ENCODE measurements at regions of chr1 and their contacts with region 1.

Region 1: GRCh38 chr1:156212833-156213643 is at the start of gene PMF1:
- DNase-seq: peak; percentile 87 to 97
- H3K4me3 ChIP-seq: peak within 1 kb of the TSS; percentile 53 to 97 (median 92)
- H3K27ac ChIP-seq: peak within 1 kb of the TSS; percentile 100
- H3K4me1 ChIP-seq: peaks cover 0 to 5% (median 3%) of the 10 kb centered on the region in 4 experiments; a peak in 5 of 7 replicates
- H3K27me3 ChIP-seq: no peaks in the 10 kb centered on the region
- CTCF ChIP-seq: no peak
- EP300 ChIP-seq: no peak
- POLR2A ChIP-seq: peak; percentile 97
- RAD21 ChIP-seq: peak in 1 of 2 experiments; percentile 6; a peak in 1 of 4 replicates
- total RNA-seq, gene PMF1: 113 and 116 TPM in 2 replicates

Region 2: GRCh38 chr1:155769257-155769656 is 443.8 kb before region 1 on chr1:
- CTCF ChIA-PET with region 1: no interaction called
- POLR2A ChIA-PET with region 1: no interaction called
- DNase-seq: no peak
- H3K4me3 ChIP-seq: no peak overlapping the region
- H3K27ac ChIP-seq: no peak overlapping the region
- H3K4me1 ChIP-seq: no peaks in the 10 kb centered on the region
- H3K27me3 ChIP-seq: no peaks in the 10 kb centered on the region
- CTCF ChIP-seq: no peak
- EP300 ChIP-seq: no peak
- POLR2A ChIP-seq: no peak
- RAD21 ChIP-seq: no peak

Region 3: GRCh38 chr1:156129706-156130581 is 83.1 kb before region 1 on chr1:
- CTCF ChIA-PET with region 1: interaction called, 1,265 read pairs
- POLR2A ChIA-PET with region 1: interaction called, 12 read pairs
- DNase-seq: peak; percentile 95 to 98
- H3K4me3 ChIP-seq: 0 out of 8 replicates have a peak overlapping the region, but pooled peaks of 1 of the 4 experiments have one; percentile 5
- H3K27ac ChIP-seq: peak overlapping the region; percentile 88
- H3K4me1 ChIP-seq: peaks cover 6 to 21% (median 10%) of the 10 kb centered on the region in 4 experiments
- H3K27me3 ChIP-seq: no peaks in the 10 kb centered on the region
- CTCF ChIP-seq: peak; percentile 96 to 99 (median 99)
- EP300 ChIP-seq: peak in 1 of 2 experiments; percentile 26; a peak in 1 of 3 replicates
- POLR2A ChIP-seq: peak in 1 of 2 experiments; percentile 71; a peak in 2 of 3 replicates
- RAD21 ChIP-seq: peak; percentile 96 to 100

Region 4: DNA sequence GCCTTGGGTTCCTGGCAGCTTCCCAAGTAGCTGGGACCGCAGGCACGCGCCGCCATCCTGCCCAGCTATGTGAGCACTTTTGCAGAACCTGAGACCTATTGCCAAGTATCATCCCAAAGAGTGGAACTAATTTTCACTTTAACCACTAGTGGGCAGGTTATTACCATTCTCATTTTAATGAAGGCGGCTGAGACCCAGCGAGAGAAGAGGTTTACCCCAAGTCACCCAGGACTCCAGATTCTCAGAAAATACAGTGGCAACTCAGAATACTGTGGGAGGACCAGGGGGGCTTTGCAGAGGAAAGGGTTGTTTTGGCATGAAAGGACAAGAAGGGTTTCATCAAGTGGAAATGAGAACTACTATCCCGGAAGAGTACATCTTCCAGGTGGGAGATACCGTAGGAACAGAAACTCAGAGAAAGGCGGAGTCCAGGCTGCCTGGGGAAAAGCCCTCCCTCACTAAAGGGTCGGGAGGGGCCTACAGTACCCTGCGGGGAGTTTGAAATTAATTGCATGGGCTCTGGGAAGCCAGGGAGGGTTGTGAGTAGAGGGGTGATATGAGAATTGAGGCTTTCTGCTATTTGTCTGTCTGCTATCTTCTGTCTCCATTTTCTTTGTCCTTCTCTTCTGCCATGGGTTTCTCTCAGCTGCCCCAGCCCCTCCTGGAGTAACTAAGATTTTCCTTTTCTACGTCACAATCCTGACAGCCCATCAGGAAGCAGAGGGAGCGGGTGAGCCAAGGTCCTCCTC is 66.8 kb before region 1 on chr1:
- CTCF ChIA-PET with region 1: interaction called, 1,265 read pairs
- POLR2A ChIA-PET with region 1: interaction called, 64 read pairs
- DNase-seq: no peak
- H3K4me3 ChIP-seq: peak overlapping the region in 1 of 4 experiments; percentile 35; a peak in 3 of 8 replicates
- H3K27ac ChIP-seq: peak overlapping the region; percentile 17; the same call in 1 of the 2 replicates
- H3K4me1 ChIP-seq: peaks cover 20 to 39% (median 29%) of the 10 kb centered on the region in 4 experiments
- H3K27me3 ChIP-seq: no peaks in the 10 kb centered on the region
- CTCF ChIP-seq: peak in 2 of 3 experiments; percentile 60 to 62; a peak in 3 of 4 replicates
- EP300 ChIP-seq: no peak
- POLR2A ChIP-seq: no peak
- RAD21 ChIP-seq: peak; percentile 74 to 79

Region 5: DNA sequence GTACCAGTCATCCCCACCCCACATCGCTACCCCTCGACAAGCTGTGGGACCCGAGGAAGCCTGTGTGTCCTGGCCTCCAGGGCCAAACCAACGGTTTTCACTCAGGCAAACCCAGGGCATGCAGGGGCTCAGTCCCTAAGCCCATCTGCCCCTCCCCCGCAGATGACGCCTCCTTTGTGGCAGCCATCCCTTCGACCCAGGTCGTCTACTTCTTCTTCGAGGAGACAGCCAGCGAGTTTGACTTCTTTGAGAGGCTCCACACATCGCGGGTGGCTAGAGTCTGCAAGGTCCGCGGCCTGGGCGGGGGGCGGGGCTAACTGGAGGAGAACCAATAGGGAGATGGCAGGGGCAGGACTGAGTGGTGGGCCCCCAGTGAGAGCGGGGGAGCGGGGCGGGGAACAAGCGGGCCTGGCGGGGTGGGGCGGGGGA is 52.3 kb before region 1 on chr1:
- CTCF ChIA-PET with region 1: interaction called, 1,265 read pairs
- POLR2A ChIA-PET with region 1: interaction called, 27 read pairs
- DNase-seq: peak in 1 of 2 experiments; percentile 81
- H3K4me3 ChIP-seq: peak overlapping the region; percentile 32 to 68 (median 34); a peak in 7 of 8 replicates
- H3K27ac ChIP-seq: no peak overlapping the region
- H3K4me1 ChIP-seq: peaks cover 3 to 14% (median 10%) of the 10 kb centered on the region in 4 experiments; a peak in 6 of 7 replicates
- H3K27me3 ChIP-seq: no peaks in the 10 kb centered on the region
- CTCF ChIP-seq: no peak
- EP300 ChIP-seq: no peak
- POLR2A ChIP-seq: peak in 1 of 2 experiments; percentile 25; a peak in 1 of 3 replicates
- RAD21 ChIP-seq: no peak

Region 6: GRCh38 chr1:156193488-156194299 is 19.3 kb before region 1 on chr1 and contains the start of gene SLC25A44:
- CTCF ChIA-PET with region 1: interaction called, 12 read pairs
- POLR2A ChIA-PET with region 1: interaction called, 77 read pairs
- DNase-seq: peak; percentile 96 to 99
- H3K4me3 ChIP-seq: peak within 1 kb of the TSS; percentile 78 to 97 (median 94)
- H3K27ac ChIP-seq: peak within 1 kb of the TSS; percentile 73; the same call in 1 of the 2 replicates
- H3K4me1 ChIP-seq: peaks cover 2 to 16% (median 4%) of the 10 kb centered on the region in 4 experiments; a peak in 5 of 7 replicates
- H3K27me3 ChIP-seq: no peaks in the 10 kb centered on the region
- CTCF ChIP-seq: peak; percentile 25 to 52 (median 51)
- EP300 ChIP-seq: 0 out of 3 replicates have a peak, but pooled peaks of 1 of the 2 experiments have one; percentile 26
- POLR2A ChIP-seq: peak; percentile 59 to 66; a peak in 2 of 3 replicates
- RAD21 ChIP-seq: peak in 1 of 2 experiments; percentile 20; a peak in 1 of 4 replicates
- total RNA-seq, gene SLC25A44: 23.4 and 31.4 TPM in 2 replicates

Region 7: DNA sequence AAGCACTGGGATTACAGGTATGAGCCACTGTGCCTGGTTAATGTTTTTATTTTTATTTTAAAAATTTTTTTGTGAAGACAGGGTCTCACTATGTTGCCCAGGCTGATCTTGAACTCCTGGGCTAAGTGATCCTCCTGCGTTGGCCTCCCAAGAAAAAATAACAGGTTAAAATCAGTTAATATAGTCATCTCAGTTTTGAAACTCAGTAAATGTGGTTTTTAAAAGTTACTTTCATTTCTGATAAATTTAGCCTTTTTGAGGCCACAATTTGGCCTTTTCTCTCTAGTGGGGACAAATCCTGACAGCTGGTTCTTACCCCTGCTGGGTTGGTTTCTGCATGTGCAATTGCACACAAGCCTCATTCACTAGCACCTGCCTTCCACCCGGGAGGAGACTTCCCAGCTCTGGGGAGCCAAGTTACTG is 13.1 kb after region 1 on chr1:
- CTCF ChIA-PET with region 1: interaction called, 34 read pairs
- POLR2A ChIA-PET with region 1: interaction called, 49 read pairs
- DNase-seq: no peak
- H3K4me3 ChIP-seq: no peak overlapping the region
- H3K27ac ChIP-seq: no peak overlapping the region
- H3K4me1 ChIP-seq: no peaks in the 10 kb centered on the region
- H3K27me3 ChIP-seq: no peaks in the 10 kb centered on the region
- CTCF ChIP-seq: no peak
- EP300 ChIP-seq: no peak
- POLR2A ChIP-seq: no peak
- RAD21 ChIP-seq: no peak

Region 8: DNA sequence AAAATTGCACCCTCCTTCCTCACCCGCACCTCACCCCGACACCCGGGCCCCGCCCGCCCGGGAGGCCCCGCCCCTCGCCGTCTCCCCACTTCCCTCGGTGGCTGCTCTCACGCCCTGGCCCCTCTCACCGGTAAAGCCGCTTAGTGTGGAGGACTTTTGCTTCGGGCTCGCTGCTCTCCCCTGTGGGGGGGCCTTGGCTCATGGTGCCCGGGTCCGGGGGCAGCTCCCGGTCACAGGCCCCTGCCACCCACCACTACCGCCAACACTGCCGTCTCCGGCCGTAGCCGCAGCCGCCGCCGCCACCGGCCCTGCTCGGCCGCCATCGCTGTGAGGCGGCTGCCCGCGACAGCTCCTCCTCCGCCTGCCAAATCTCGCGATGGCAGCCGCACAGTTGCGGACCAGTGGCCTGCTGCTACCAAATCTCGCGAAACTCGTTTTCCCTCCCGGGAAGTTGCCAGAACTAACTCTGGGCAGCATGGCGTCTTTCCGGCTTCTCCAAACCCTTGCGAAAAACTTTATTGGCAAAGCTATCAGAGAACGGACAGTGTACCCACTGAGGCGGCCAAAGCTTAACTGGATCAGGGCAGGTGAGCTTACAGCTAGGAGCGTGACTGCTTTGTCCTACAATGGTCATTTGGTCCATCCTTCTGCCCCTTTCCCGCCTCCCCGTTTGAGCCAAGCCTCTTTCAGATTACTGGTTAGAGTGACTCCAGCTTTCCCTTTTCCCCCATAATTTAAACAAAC is 69.6 kb after region 1 on chr1 and contains the start of gene SMG5:
- CTCF ChIA-PET with region 1: no interaction called
- POLR2A ChIA-PET with region 1: interaction called, 20 read pairs
- DNase-seq: peak; percentile 94 to 96
- H3K4me3 ChIP-seq: peak within 1 kb of the TSS; percentile 74 to 93 (median 85)
- H3K27ac ChIP-seq: peak within 1 kb of the TSS; percentile 90
- H3K4me1 ChIP-seq: peaks cover 0 to 10% (median 3%) of the 10 kb centered on the region in 4 experiments; a peak in 2 of 7 replicates
- H3K27me3 ChIP-seq: no peaks in the 10 kb centered on the region
- CTCF ChIP-seq: no peak
- EP300 ChIP-seq: peak in 1 of 2 experiments; percentile 77; a peak in 1 of 3 replicates
- POLR2A ChIP-seq: peak; percentile 98 to 99
- RAD21 ChIP-seq: no peak
- total RNA-seq, gene SMG5: 94.7 and 98.0 TPM in 2 replicates

Measured in H1 (cell line).